ENCODE measurements at regions of chr10 and their contacts with region 1.

Region 1: GRCh38 chr10:11757821-11758463 is 15.8 kb downstream of the ECHDC3 start:
- DNase-seq: peak; percentile 72
- ATAC-seq: peak; percentile 100
- H3K4me3 Mint-ChIP-seq: no peak overlapping the region
- H3K27ac Mint-ChIP-seq: no peak overlapping the region
- H3K4me1 Mint-ChIP-seq: peaks cover 4% of the 10 kb centered on the region
- H3K27me3 Mint-ChIP-seq: no peaks in the 10 kb centered on the region
- CTCF ChIP-seq: no peak

Region 2: DNA sequence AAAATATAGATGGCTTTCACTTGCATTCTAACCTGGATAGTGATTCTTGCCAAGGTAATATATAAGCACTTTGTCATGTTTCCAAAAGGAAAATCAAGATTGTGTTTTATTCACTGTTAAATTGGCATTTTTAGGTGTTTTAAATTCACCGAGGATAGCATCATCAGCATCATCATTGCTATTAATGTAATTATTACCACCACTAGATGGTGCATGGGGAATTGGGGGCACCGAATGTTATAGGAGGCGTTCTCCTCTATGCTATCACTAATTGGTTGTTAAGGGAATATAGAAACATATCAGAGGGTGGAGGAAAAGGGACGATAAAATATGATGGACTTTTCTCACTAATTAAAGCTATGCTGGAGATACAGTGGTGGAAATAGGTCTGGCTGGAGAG is 644.8 kb before region 1 on chr10:
- CTCF ChIA-PET with region 1: no interaction called
- POLR2A ChIA-PET with region 1: no interaction called
- intact Hi-C with region 1: loop called (anchors 1 kb)
- DNase-seq: no peak
- ATAC-seq: peak; percentile 73
- H3K4me3 Mint-ChIP-seq: no peak overlapping the region
- H3K27ac Mint-ChIP-seq: no peak overlapping the region
- H3K4me1 Mint-ChIP-seq: peaks cover 9% of the 10 kb centered on the region
- H3K27me3 Mint-ChIP-seq: no peaks in the 10 kb centered on the region
- CTCF ChIP-seq: no peak

Region 3: DNA sequence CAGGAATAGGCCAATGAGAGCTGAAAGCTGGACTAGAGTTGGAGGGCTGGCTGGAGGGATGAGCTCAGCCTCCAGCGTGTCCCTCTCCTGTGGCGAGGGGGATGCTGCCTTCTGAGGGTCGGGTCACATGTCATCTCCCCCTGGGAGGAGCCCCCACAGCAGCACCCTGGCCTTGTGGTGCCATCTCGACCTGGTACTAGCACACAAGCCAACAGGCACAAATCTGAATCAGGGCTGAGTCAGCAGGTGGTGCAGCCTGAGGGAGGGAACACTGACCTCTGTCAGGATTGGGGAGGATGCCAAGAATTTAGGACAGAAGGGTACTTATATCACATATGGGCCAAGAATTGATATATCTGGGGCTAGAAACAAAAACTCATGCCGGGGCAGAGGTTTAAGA is 459.8 kb before region 1 on chr10:
- CTCF ChIA-PET with region 1: no interaction called
- POLR2A ChIA-PET with region 1: no interaction called
- intact Hi-C with region 1: loop called (anchors 10 kb)
- DNase-seq: no peak
- ATAC-seq: no peak
- H3K4me3 Mint-ChIP-seq: no peak overlapping the region
- H3K27ac Mint-ChIP-seq: peak overlapping the region; percentile 53
- H3K4me1 Mint-ChIP-seq: no peaks in the 10 kb centered on the region
- H3K27me3 Mint-ChIP-seq: no peaks in the 10 kb centered on the region
- CTCF ChIP-seq: no peak

Region 4: DNA sequence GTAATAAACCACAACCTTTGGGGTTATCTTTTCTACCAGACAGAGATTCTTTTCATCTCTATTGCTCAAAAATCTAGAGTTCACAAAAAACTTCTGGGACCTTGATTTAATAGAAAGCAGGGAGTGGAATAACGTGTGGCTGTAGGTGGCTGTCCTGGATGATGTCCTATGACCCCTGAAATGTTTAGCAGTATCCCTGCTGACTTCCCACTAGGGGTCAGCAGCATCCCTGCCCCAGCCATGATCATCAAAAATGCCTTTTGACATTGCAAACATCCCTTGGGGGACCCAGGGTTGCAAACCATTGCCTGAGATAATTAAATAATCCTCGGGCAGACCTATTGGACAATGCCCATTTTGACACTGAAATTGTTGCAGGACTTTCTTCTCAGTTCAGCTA is 323.6 kb before region 1 on chr10:
- CTCF ChIA-PET with region 1: interaction called, 7 read pairs
- POLR2A ChIA-PET with region 1: no interaction called
- intact Hi-C with region 1: loop called (anchors 1 kb)
- DNase-seq: no peak
- ATAC-seq: no peak
- H3K4me3 Mint-ChIP-seq: no peak overlapping the region
- H3K27ac Mint-ChIP-seq: no peak overlapping the region
- H3K4me1 Mint-ChIP-seq: peaks cover 3% of the 10 kb centered on the region
- H3K27me3 Mint-ChIP-seq: no peaks in the 10 kb centered on the region
- CTCF ChIP-seq: no peak

Region 5: GRCh38 chr10:11505639-11506038 is 252.3 kb before region 1 on chr10:
- CTCF ChIA-PET with region 1: interaction called, 12 read pairs
- POLR2A ChIA-PET with region 1: no interaction called
- intact Hi-C with region 1: no loop called
- DNase-seq: no peak
- ATAC-seq: peak; percentile 66
- H3K4me3 Mint-ChIP-seq: peak overlapping the region; percentile 49
- H3K27ac Mint-ChIP-seq: peak overlapping the region; percentile 88
- H3K4me1 Mint-ChIP-seq: peaks cover 27% of the 10 kb centered on the region
- H3K27me3 Mint-ChIP-seq: no peaks in the 10 kb centered on the region
- CTCF ChIP-seq: no peak

Region 6: GRCh38 chr10:11724938-11725776 is 32.8 kb before region 1 on chr10:
- CTCF ChIA-PET with region 1: interaction called, 12 read pairs
- POLR2A ChIA-PET with region 1: interaction called, 3 read pairs
- intact Hi-C with region 1: loop called (anchors 1 kb)
- DNase-seq: no peak
- ATAC-seq: peak; percentile 95
- H3K4me3 Mint-ChIP-seq: no peak overlapping the region
- H3K27ac Mint-ChIP-seq: peak overlapping the region; percentile 79
- H3K4me1 Mint-ChIP-seq: peaks cover 29% of the 10 kb centered on the region
- H3K27me3 Mint-ChIP-seq: no peaks in the 10 kb centered on the region
- CTCF ChIP-seq: peak; percentile 45

Region 7: GRCh38 chr10:11830836-11831519 is 73.0 kb after region 1 on chr10:
- CTCF ChIA-PET with region 1: no interaction called
- POLR2A ChIA-PET with region 1: no interaction called
- intact Hi-C with region 1: no loop called
- DNase-seq: no peak
- ATAC-seq: no peak
- H3K4me3 Mint-ChIP-seq: no peak overlapping the region
- H3K27ac Mint-ChIP-seq: no peak overlapping the region
- H3K4me1 Mint-ChIP-seq: no peaks in the 10 kb centered on the region
- H3K27me3 Mint-ChIP-seq: peaks cover 9% of the 10 kb centered on the region
- CTCF ChIP-seq: no peak